H1 (cell line): ENCODE measurements at regions of chr17 and their contacts with region 1.

Region 1: DNA sequence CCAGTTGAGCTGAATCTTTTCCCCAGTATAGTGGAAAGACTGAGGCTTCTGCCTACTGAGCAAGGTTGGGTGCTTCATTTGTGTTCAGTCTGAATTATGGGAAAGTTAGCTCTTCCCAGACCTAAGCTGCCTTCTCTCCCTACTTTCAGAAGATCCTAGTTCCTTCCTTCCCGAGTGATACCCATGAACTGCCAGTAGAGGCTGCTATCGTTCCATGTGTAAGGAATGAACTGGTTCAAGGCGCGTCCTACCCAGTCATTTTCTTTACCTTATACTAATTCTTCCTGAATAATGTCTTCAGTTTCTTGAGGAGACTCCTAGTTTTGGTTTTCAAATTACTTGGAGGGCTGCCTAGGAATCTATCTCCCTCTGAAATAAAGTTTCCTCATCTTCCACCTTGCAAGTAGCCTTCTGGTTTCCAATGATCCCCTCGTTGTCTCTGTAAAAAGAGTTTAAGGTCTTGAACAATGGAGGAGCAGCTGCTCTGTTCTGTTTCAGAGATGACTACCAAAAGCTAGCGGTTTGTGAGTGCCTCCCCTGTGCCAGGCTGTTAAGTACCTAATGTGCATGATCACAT is 934 bp upstream of the AOC2 start:
- DNase-seq: no peak
- H3K4me3 ChIP-seq: no peak overlapping the region
- H3K27ac ChIP-seq: no peak overlapping the region
- H3K4me1 ChIP-seq: no peaks in the 10 kb centered on the region
- H3K27me3 ChIP-seq: no peaks in the 10 kb centered on the region
- CTCF ChIP-seq: peak; percentile 46 to 97 (median 90)
- EP300 ChIP-seq: no peak
- POLR2A ChIP-seq: no peak
- RAD21 ChIP-seq: peak; percentile 98 to 99

Region 2: GRCh38 chr17:42779936-42780850 is 63.3 kb before region 1 on chr17 and contains the start of gene WNK4:
- CTCF ChIA-PET with region 1: no interaction called
- POLR2A ChIA-PET with region 1: no interaction called
- DNase-seq: peak in 1 of 2 experiments; percentile 73
- H3K4me3 ChIP-seq: peak within 1 kb of the TSS; percentile 38 to 76 (median 54)
- H3K27ac ChIP-seq: no peak within 1 kb of the TSS
- H3K4me1 ChIP-seq: peaks cover 0 to 14% (median 8%) of the 10 kb centered on the region in 4 experiments; a peak in 6 of 7 replicates
- H3K27me3 ChIP-seq: peaks cover 6 to 23% (median 19%) of the 10 kb centered on the region in 4 experiments
- CTCF ChIP-seq: no peak
- EP300 ChIP-seq: no peak
- POLR2A ChIP-seq: peak in 1 of 2 experiments; percentile 77; a peak in 2 of 3 replicates
- RAD21 ChIP-seq: no peak
- total RNA-seq, gene WNK4: 1.2 and 1.7 TPM in 2 replicates

Region 3: GRCh38 chr17:42832974-42833766 is 10.3 kb before region 1 on chr17 and contains the start of gene PSME3:
- CTCF ChIA-PET with region 1: interaction called, 7 read pairs
- POLR2A ChIA-PET with region 1: interaction called, 111 read pairs
- DNase-seq: peak; percentile 54 to 96
- H3K4me3 ChIP-seq: peak within 1 kb of the TSS; percentile 75 to 99 (median 96)
- H3K27ac ChIP-seq: peak within 1 kb of the TSS; percentile 99
- H3K4me1 ChIP-seq: peaks cover 0 to 2% (median 0%) of the 10 kb centered on the region in 4 experiments; a peak in 2 of 7 replicates
- H3K27me3 ChIP-seq: no peaks in the 10 kb centered on the region
- CTCF ChIP-seq: no peak
- EP300 ChIP-seq: no peak
- POLR2A ChIP-seq: peak; percentile 87 to 94
- RAD21 ChIP-seq: no peak; a peak in 1 of 4 replicates
- total RNA-seq, gene PSME3: 223 and 224 TPM in 2 replicates

Region 4: GRCh38 chr17:42866631-42867575 is 23.5 kb after region 1 on chr17:
- CTCF ChIA-PET with region 1: interaction called, 13 read pairs
- POLR2A ChIA-PET with region 1: interaction called, 10 read pairs
- DNase-seq: no peak
- H3K4me3 ChIP-seq: no peak overlapping the region
- H3K27ac ChIP-seq: no peak overlapping the region
- H3K4me1 ChIP-seq: no peaks in the 10 kb centered on the region
- H3K27me3 ChIP-seq: no peaks in the 10 kb centered on the region
- CTCF ChIP-seq: no peak
- EP300 ChIP-seq: no peak
- POLR2A ChIP-seq: no peak
- RAD21 ChIP-seq: no peak

Region 5: GRCh38 chr17:42906772-42907446 is 63.5 kb after region 1 on chr17:
- CTCF ChIA-PET with region 1: interaction called, 16 read pairs
- POLR2A ChIA-PET with region 1: interaction called, 3 read pairs
- DNase-seq: no peak
- H3K4me3 ChIP-seq: no peak overlapping the region
- H3K27ac ChIP-seq: no peak overlapping the region
- H3K4me1 ChIP-seq: no peaks in the 10 kb centered on the region
- H3K27me3 ChIP-seq: no peaks in the 10 kb centered on the region
- CTCF ChIP-seq: no peak
- EP300 ChIP-seq: no peak
- POLR2A ChIP-seq: no peak
- RAD21 ChIP-seq: no peak

Region 6: DNA sequence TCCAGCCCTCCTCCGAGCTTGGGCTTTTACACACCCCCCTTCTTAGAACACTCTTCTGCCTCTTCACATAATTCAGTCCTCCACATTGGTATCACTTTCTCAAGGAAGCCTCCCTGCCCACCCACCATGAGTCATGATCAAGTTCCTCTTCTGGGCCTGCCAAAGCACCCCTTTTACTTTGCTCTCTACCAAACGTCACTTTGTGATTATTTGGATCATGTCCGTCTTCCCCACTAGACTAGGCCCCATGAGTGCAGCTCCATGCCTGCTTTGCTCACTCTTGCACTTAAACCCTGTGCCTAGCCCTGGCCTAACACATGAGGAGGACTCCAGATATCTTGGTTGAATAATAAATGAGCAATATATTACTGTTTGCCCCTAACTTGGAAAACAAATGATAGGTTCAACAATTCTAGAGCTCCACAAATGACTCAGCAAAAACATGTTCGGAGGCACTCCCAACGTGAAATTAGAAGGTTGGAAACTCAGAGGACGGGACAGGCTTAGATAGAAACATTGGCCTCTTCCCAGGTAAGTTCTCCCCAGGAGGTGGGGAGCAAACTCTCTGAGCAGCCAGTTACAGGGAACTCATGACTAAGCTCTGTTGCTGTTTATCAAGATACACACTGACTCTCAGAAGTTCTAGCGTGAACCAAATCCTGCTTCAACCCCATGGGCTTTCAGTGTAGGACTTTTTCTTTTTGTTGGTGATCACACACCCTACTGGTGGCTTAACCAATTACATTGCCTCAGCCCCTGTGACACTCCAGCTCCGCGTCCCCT is 85.5 kb after region 1 on chr17:
- CTCF ChIA-PET with region 1: interaction called, 141 read pairs
- POLR2A ChIA-PET with region 1: interaction called, 73 read pairs
- DNase-seq: peak in 1 of 2 experiments; percentile 54
- H3K4me3 ChIP-seq: no peak overlapping the region
- H3K27ac ChIP-seq: peak overlapping the region; percentile 21; the same call in 1 of the 2 replicates
- H3K4me1 ChIP-seq: peaks cover 0 to 5% (median 1%) of the 10 kb centered on the region in 4 experiments; a peak in 3 of 7 replicates
- H3K27me3 ChIP-seq: no peaks in the 10 kb centered on the region
- CTCF ChIP-seq: peak; percentile 38 to 65 (median 62)
- EP300 ChIP-seq: no peak
- POLR2A ChIP-seq: peak in 1 of 2 experiments; percentile 34; a peak in 1 of 3 replicates
- RAD21 ChIP-seq: peak; percentile 72 to 76

Region 7: GRCh38 chr17:43033948-43034881 is 190.8 kb after region 1 on chr17:
- CTCF ChIA-PET with region 1: no interaction called
- POLR2A ChIA-PET with region 1: no interaction called
- DNase-seq: no peak
- H3K4me3 ChIP-seq: peak overlapping the region in 3 of 4 experiments; percentile 6 to 48 (median 14); a peak in 4 of 8 replicates
- H3K27ac ChIP-seq: peak overlapping the region; percentile 64
- H3K4me1 ChIP-seq: peaks cover 14 to 30% (median 25%) of the 10 kb centered on the region in 4 experiments
- H3K27me3 ChIP-seq: no peaks in the 10 kb centered on the region
- CTCF ChIP-seq: no peak
- EP300 ChIP-seq: no peak
- POLR2A ChIP-seq: no peak
- RAD21 ChIP-seq: no peak